ENCODE measurements at regions of chr12 and their contacts with region 1.

Region 1: GRCh38 chr12:13339538-13339937 is 143.0 kb downstream of the EMP1 start:
- DNase-seq: no peak
- H3K4me3 ChIP-seq: no peak overlapping the region
- H3K27ac ChIP-seq: no peak overlapping the region
- H3K4me1 ChIP-seq: no peaks in the 10 kb centered on the region
- H3K27me3 ChIP-seq: no peaks in the 10 kb centered on the region
- CTCF ChIP-seq: no peak
- POLR2A ChIP-seq: no peak

Region 2: DNA sequence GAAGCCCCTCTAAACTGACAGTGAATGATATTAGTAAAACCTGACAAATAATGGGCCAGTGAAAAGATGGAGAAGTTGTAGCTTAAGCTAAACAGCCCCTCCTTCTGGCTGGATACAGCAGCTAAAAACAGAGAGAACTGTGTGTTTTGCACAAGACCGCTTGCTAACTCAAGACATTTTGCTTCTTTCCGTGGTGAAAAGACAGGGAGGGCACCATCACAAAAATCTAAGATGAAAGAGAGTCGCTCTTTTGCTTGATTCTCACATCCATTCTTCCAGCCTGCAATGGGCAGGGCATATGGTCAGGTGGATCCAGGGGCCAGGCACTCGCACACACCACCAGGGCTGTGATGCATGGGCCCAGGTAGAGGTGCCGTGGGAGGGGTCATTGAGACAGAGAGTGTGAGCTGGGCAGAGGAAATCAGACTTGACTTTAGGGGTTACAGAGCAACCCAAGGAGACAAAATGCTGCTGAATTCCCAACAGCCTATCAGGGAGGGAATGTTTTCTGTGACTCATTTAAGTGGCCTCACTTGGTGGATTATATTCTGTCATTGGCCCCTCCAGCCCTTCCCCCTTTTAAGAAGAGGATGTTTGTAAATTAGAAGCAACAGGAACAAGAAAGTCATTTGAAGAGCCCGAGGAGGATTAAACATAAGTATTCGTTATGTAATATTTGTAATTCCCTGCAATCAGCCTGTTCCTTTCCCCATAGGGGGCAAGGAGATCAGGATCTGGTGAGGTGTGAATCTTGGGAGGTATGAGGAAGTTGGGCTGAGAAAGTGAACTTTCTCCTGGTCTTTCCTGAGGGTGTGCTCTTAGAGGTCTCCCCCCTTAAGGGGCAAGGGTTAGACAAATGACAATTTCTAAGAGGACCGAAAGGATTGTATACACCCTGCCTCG is 130.8 kb before region 1 on chr12:
- intact Hi-C with region 1: no loop called
- DNase-seq: no peak
- H3K4me3 ChIP-seq: no peak overlapping the region
- H3K27ac ChIP-seq: peak overlapping the region; percentile 38 to 69
- H3K4me1 ChIP-seq: peaks cover 3 to 33% of the 10 kb centered on the region in 2 donors
- H3K27me3 ChIP-seq: no peaks in the 10 kb centered on the region
- CTCF ChIP-seq: peak in 1 of 3 donors; percentile 31
- POLR2A ChIP-seq: no peak

Region 3: GRCh38 chr12:13304924-13305323 is 34.6 kb before region 1 on chr12:
- intact Hi-C with region 1: loop called (anchors 1 kb)
- DNase-seq: no peak
- H3K4me3 ChIP-seq: no peak overlapping the region
- H3K27ac ChIP-seq: no peak overlapping the region
- H3K4me1 ChIP-seq: no peaks in the 10 kb centered on the region
- H3K27me3 ChIP-seq: no peaks in the 10 kb centered on the region
- CTCF ChIP-seq: no peak
- POLR2A ChIP-seq: no peak

Region 4: GRCh38 chr12:13573698-13574321 is 234.3 kb after region 1 on chr12:
- intact Hi-C with region 1: loop called (anchors 5 kb)
- DNase-seq: no peak
- H3K4me3 ChIP-seq: no peak overlapping the region
- H3K27ac ChIP-seq: no peak overlapping the region
- H3K4me1 ChIP-seq: no peaks in the 10 kb centered on the region
- H3K27me3 ChIP-seq: no peaks in the 10 kb centered on the region
- CTCF ChIP-seq: no peak
- POLR2A ChIP-seq: no peak

Measured in breast epithelium (tissue), 4 donors.